PC-9 (cell line): ENCODE measurements at regions of chr9 and their contacts with region 1.

Region 1: DNA sequence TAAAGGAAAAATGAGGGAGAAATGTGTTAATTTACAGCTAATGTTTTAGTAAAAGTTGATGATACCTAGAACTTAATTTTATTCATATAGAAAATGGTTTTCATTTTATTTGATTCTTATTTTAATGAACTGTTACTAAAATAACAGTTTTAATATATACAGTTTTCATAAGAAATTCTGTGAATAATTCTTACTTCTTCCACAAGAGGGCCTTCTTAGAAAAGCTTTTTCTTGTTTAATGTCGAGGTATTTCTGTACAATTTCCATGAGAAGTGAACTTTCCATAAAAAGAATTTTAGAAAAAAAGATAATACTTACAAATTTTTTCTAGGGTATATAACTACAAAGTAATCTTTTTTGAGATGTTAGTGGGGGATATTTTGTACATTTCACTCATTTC is 73.9 kb downstream of the KLF9 start:
- DNase-seq: no peak
- H3K4me3 ChIP-seq: no peak overlapping the region
- H3K27ac ChIP-seq: no peak overlapping the region
- H3K4me1 ChIP-seq: no peaks in the 10 kb centered on the region
- H3K27me3 ChIP-seq: no peaks in the 10 kb centered on the region
- CTCF ChIP-seq: peak; percentile 78

Region 2: DNA sequence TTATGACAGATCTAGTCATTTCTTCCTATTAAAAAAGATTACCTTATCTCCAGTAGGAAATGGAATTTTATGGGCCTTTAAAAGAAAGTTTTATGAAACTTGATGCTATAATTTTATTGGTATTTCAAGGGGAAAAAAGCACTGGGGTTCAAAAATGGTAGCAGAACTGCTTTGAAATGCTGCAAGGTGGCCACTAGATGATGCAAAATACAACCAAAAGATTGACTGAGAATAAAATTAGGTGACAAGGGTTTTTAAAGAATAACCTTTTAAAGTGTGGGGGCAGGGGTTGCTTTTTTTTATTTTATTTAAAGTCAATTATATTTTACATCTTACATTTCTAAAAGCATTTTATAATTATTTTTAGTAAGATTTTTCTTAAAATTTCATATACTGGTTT is 12.2 kb after region 1 on chr9:
- CTCF ChIA-PET with region 1: no interaction called
- POLR2A ChIA-PET with region 1: no interaction called
- intact Hi-C with region 1: no loop called
- DNase-seq: no peak
- H3K4me3 ChIP-seq: no peak overlapping the region
- H3K27ac ChIP-seq: no peak overlapping the region
- H3K4me1 ChIP-seq: no peaks in the 10 kb centered on the region
- H3K27me3 ChIP-seq: no peaks in the 10 kb centered on the region
- CTCF ChIP-seq: peak; percentile 41; the same call in 1 of the 2 replicates

Region 3: GRCh38 chr9:70362952-70363351 is 22.4 kb after region 1 on chr9:
- CTCF ChIA-PET with region 1: no interaction called
- POLR2A ChIA-PET with region 1: no interaction called
- intact Hi-C with region 1: no loop called
- DNase-seq: no peak
- H3K4me3 ChIP-seq: no peak overlapping the region
- H3K27ac ChIP-seq: no peak overlapping the region
- H3K4me1 ChIP-seq: no peaks in the 10 kb centered on the region
- H3K27me3 ChIP-seq: no peaks in the 10 kb centered on the region
- CTCF ChIP-seq: no peak

Region 4: DNA sequence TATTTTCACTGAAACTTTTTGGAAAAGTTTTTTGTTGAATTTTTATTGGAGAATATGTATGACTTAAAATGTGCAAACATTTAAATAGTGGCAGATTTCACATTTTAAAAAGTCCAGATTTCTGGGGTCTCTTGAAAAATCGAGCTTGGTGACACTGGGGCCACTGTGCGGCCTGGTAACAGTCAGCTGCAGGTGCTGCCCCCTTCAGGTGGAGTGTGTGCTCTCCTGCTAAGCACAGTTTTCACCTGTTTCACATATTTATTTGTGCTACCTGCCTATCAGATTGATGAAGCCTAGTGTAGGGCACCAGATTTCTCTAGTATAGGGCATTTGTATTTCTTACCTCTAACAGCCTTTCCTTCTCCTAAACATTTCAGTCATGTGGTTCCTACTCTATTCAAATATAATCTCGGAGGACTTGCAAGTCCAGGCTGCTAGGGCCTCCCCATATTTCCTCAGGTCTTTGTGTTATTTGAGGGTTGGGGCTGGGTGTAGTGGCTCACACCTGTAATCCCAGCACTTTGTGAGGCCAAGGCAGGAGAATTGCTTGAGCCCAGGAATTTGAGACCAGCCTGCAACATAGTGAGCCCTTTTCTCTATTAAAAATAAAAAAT is 169.7 kb after region 1 on chr9:
- CTCF ChIA-PET with region 1: no interaction called
- POLR2A ChIA-PET with region 1: no interaction called
- intact Hi-C with region 1: loop called (anchors 10 kb)
- DNase-seq: peak in 1 of 2 experiments; percentile 21
- H3K4me3 ChIP-seq: no peak overlapping the region
- H3K27ac ChIP-seq: no peak overlapping the region
- H3K4me1 ChIP-seq: no peaks in the 10 kb centered on the region
- H3K27me3 ChIP-seq: no peaks in the 10 kb centered on the region
- CTCF ChIP-seq: peak; percentile 60